ENCODE measurements at regions of chr17 and their contacts with region 1.

Region 1: GRCh38 chr17:74748529-74749365 is at the start of gene NHERF1:
- DNase-seq: peak; percentile 97
- H3K4me3 ChIP-seq: peak within 1 kb of the TSS; percentile 52 to 77 (median 70)
- H3K27ac ChIP-seq: peak within 1 kb of the TSS; percentile 68 to 77 (median 74)
- H3K4me1 ChIP-seq: peaks cover 0 to 29% (median 20%) of the 10 kb centered on the region in 4 donors
- H3K27me3 ChIP-seq: peaks cover 0 to 7% (median 0%) of the 10 kb centered on the region in 3 donors
- CTCF ChIP-seq: no peak
- EP300 ChIP-seq: no peak
- POLR2A ChIP-seq: peak; percentile 81 to 89
- total RNA-seq, gene NHERF1: 6.6 to 12.5 (median 7.3) TPM

Region 2: DNA sequence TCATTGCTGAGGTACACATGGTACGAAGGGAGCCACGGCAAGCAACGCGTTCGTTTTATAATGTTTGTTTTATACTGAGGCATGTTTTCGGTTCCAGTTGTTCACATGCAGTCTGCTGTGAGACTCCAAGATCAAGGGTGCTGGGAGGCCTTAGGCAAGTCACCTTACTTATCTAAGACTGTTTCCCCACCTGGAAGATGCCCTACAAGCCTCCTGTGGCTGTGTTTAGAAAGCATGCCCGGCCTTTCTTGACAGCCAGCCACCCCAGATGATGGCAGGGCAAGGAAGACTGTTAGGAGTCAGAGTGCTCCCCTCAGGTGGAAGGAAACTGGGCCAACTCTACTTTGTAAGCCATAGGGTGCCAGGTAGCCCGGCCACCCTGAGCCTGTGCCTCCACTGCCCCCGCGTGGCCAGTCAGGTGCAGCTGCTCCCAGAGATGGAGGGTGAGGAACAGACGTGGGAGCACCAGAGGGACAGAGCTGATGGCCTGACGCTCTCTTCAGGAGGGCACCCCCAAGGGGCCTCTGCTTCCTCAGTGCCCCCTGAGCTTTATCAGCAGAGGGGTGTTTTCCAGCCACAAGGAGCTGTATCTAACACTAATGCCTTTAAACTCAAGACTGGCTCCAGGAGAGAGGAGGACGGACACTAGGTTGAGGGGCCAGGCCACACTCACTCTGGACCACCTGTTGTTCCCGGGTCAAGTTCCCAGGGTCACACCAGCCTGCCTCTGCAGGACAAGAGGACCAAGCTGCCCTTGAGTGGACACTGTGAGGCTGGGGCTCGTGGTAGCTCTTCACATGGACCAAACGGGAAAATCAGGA is 22.0 kb after region 1 on chr17:
- intact Hi-C with region 1: loop called (anchors 2 kb)
- DNase-seq: no peak
- H3K4me3 ChIP-seq: no peak overlapping the region
- H3K27ac ChIP-seq: no peak overlapping the region
- H3K4me1 ChIP-seq: peaks cover 0 to 29% (median 21%) of the 10 kb centered on the region in 4 donors
- H3K27me3 ChIP-seq: no peaks in the 10 kb centered on the region
- CTCF ChIP-seq: peak; percentile 9 to 70 (median 53)
- EP300 ChIP-seq: no peak
- POLR2A ChIP-seq: no peak

Region 3: DNA sequence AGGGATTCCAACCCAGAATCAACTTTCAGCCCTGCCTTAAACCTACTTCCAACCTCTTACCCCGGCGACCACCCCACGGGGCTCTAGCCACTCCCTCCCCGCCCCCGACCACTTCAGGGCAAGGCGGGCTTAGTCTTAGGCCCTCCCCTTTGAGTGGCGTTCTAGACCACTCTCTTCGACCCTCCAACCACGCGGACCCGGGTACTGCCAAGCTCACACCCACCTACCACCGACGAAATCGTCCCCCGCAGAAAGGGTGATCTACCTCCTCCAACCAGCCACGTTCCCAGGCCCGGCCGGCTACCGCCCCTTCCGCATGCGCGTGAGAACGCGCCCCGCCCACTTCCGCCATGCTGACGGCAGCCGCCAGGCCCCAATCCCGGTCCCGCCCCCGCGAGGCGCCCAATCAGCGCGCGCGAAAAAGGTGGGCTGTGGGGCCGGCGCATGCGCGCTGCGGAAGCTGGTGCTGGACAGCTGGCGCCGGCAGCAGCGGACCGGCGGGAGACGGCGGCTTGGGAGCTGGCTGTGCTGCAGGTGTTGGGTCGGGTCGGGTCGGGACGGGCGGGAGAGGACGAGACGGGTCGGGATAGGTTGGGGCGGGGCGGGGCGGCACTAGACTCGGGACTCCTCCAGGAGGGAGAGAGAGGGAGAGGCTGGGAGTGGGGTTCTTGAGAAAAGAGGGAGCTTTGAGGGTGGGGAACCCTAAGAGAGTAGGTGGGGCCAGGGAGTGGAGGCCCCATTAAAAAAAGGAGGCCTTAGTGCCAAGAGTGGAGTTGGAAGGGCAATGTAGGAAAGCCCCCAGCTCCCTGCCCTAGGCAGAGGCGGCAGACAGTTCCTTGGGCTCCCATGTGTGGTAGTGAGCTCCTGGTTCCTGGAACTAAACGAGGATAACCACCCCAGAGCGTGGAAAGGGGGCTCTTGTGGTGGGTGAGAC is 27.6 kb after region 1 on chr17 and contains the start of gene NAT9:
- intact Hi-C with region 1: loop called (anchors 1 kb)
- DNase-seq: peak; percentile 99
- H3K4me3 ChIP-seq: peak within 1 kb of the TSS; percentile 47 to 90 (median 77)
- H3K27ac ChIP-seq: peak within 1 kb of the TSS; percentile 66 to 80 (median 74)
- H3K4me1 ChIP-seq: peaks cover 0 to 33% (median 21%) of the 10 kb centered on the region in 4 donors
- H3K27me3 ChIP-seq: no peaks in the 10 kb centered on the region
- CTCF ChIP-seq: no peak
- EP300 ChIP-seq: peak in 1 of 4 donors; percentile 46
- POLR2A ChIP-seq: peak in 1 of 2 donors; percentile 26
- total RNA-seq, gene NAT9: 14.3 to 29.9 (median 21.7) TPM

Region 4: DNA sequence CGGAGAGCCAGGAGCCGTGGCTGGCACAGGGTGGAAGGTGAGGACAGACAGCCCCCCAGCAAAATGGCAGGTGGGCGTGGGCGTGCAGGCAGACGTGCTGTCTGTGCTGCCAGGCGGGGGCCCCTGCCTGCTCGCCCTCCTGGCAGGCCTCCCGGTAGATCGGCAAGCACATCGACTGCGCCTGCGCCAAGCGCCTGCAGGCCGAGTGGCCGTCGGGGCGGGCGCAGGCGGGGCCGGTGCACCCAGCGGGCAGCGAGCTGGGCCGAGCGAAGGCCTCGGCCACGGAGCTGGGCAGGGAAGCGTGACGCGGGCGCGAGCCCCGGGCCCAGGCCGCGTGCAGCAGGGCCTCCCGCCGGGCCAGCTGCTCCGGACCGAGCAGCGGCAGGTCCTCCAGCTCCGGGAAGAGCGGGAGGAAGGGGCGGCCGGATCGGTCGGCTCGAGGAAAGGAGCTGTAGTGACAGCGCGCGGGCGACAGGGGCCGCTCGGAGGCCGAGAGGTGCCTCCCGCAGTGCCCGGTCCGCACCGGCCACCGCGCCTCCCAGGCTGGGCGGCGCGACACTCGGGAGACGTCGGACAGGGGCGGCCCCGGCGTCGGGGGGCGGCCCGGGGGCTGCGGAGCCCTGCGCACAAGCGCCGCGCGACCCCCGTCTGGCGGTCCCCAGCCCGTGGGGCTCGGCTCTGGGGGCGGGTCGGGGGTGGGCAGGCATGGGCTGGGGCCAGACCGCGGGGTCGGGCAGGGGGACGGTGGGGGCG is 94.0 kb after region 1 on chr17:
- intact Hi-C with region 1: no loop called
- DNase-seq: no peak
- H3K4me3 ChIP-seq: peak overlapping the region in 3 of 4 donors; percentile 43 to 46 (median 45)
- H3K27ac ChIP-seq: peak overlapping the region in 2 of 4 donors; percentile 42 to 67
- H3K4me1 ChIP-seq: peaks cover 0 to 34% (median 31%) of the 10 kb centered on the region in 4 donors
- H3K27me3 ChIP-seq: peaks cover 0 to 8% (median 0%) of the 10 kb centered on the region in 3 donors
- CTCF ChIP-seq: peak in 3 of 4 experiments; percentile 12 to 58 (median 37)
- EP300 ChIP-seq: no peak
- POLR2A ChIP-seq: no peak

Region 5: DNA sequence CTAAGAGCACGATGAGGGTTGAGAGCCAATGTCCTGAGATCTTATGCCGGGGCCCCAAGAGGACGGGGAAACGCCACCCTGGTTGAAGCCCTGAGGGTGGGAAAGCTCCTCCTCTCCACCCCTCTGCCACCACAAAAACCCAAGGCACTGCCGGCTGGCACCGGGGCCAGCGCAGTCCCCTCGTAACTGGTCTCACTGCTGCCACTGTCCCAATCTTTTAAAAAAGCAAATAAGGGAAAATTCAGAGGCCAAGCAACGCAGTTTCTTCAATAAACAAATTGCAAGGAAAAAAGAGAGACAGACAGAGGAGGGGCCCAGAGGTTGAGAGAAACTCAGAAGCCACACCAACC is 104.3 kb after region 1 on chr17:
- intact Hi-C with region 1: no loop called
- DNase-seq: no peak
- H3K4me3 ChIP-seq: no peak overlapping the region
- H3K27ac ChIP-seq: no peak overlapping the region
- H3K4me1 ChIP-seq: peaks cover 0 to 10% (median 6%) of the 10 kb centered on the region in 4 donors
- H3K27me3 ChIP-seq: peaks cover 18 to 78% (median 71%) of the 10 kb centered on the region in 3 donors
- CTCF ChIP-seq: no peak
- EP300 ChIP-seq: no peak
- POLR2A ChIP-seq: no peak

Region 6: DNA sequence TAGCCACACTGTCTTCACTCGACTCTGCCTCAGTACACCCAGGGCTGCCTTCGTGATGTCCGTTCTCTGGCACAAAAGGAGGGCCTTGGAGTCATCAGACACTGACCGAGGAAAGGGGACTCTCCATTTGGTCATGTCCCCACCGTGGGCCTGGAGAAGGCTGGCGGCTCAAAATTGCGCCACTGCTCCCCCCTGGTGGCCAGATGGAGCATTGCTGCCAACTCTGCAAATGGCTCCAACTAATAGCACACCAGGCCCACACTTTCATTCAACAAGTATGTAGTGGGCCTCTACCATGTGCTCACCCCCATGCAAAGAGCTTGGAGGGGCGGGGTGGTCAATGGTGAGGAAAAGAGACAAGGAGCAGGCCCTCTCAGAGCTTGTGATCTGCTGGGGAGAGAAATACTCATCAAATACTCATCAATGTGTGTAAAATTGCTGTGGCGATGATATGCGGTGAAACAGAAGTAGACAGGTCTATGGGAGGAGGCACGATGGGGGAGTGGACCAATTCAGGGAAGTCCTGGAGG is 116.2 kb after region 1 on chr17:
- intact Hi-C with region 1: loop called (anchors 1 kb)
- DNase-seq: peak; percentile 87
- H3K4me3 ChIP-seq: no peak overlapping the region
- H3K27ac ChIP-seq: no peak overlapping the region
- H3K4me1 ChIP-seq: peaks cover 0 to 24% (median 22%) of the 10 kb centered on the region in 4 donors
- H3K27me3 ChIP-seq: peaks cover 18 to 31% (median 20%) of the 10 kb centered on the region in 3 donors
- CTCF ChIP-seq: peak; percentile 89 to 96 (median 94)
- EP300 ChIP-seq: no peak
- POLR2A ChIP-seq: no peak

Region 7: GRCh38 chr17:74873038-74873873 is 124.5 kb after region 1 on chr17:
- intact Hi-C with region 1: loop called (anchors 2 kb)
- DNase-seq: peak; percentile 100
- H3K4me3 ChIP-seq: peak overlapping the region; percentile 49 to 63 (median 58)
- H3K27ac ChIP-seq: peak overlapping the region; percentile 82 to 95 (median 90)
- H3K4me1 ChIP-seq: peaks cover 0 to 20% (median 13%) of the 10 kb centered on the region in 4 donors
- H3K27me3 ChIP-seq: peaks cover 0 to 7% (median 0%) of the 10 kb centered on the region in 3 donors
- CTCF ChIP-seq: no peak
- EP300 ChIP-seq: peak in 1 of 4 donors; percentile 75
- POLR2A ChIP-seq: peak; percentile 97 to 99

Region 8: DNA sequence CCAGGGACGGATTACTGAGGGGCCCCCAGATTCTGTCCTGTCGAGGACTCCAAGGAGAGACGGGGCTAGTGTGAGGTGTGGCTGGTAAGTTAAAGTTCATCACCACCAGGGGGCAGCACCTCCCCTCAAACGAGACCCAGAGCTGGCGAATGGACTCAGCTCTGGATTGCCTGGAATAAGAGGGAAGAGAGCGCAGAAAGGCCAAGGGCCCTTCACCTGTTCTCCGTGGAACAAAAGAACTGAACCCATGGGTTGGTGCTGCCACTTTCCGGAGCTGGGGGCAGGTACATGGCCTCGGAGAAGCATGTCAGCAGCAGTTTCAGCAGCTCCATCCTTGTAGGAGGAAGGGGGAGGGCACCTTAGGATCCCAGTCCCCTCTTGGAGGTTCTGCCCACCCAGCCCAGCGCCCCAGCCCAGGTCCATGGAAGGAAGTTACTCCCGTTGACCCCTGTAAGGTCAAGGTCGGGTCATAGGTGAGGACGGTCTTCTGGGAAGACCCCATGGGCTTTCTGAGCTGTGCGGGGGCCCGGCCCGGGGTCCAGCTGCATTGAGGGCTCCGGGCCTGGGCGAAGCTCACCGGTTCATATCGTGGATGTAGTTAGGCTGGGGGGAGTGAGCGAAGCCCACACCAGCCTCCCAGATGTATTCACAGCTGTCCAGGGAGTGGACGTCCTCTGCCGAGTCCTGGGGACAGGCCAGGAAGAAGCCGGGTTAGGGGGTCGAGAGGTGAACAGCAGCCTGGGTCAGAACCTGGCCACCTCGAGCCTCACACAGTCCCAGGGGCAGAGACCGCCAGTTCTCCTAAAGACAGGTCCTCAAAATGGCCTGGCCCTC is 213.1 kb after region 1 on chr17:
- intact Hi-C with region 1: loop called (anchors 5 kb)
- DNase-seq: peak; percentile 95
- H3K4me3 ChIP-seq: no peak overlapping the region
- H3K27ac ChIP-seq: no peak overlapping the region
- H3K4me1 ChIP-seq: peaks cover 0 to 4% (median 2%) of the 10 kb centered on the region in 4 donors
- H3K27me3 ChIP-seq: no peaks in the 10 kb centered on the region
- CTCF ChIP-seq: peak; percentile 61 to 85 (median 70)
- EP300 ChIP-seq: no peak
- POLR2A ChIP-seq: no peak

Measured in sigmoid colon (tissue), 7 donors.